ENCODE measurements at regions of chr7 and their contacts with region 1.

Region 1: DNA sequence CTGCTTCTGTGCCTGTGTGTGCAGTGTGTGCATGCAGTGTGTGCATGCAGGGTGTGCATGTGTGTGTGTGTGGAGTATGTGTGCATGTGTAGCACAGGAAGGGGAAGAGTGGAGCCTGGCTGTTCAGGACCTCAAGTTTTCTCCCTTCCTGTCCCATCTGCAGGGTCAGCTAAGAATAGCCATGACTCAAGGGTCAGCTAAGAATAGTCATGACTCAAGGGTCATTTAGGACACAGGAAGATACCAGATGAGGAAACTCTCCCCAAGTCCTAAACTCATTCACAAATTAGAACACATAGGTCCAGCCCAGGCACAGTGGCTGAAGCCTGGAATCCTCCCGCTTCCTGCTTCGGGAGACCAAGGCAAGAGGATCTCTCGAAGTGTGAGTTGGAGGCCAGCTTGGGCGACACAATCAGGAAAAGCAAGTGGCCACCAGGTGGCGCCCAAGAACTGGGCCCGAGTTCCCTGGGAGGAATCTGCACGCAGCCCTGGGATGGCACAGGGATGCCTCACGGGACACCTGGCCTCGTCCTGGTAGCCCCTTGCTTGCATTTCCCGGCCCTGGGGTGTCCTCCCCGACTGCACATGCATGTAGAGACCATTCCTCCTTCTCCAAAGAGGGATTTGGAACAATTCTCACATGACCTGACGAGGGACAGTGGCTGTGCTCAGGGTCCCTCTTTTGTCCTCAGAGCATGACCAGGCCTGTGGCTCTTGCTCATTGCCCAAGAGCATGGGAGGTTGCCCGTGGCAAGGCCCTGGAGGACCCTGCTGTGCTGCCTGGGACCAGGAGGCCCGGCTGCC is 21.4 kb upstream of the VOPP1 start:
- DNase-seq: no peak
- H3K4me3 ChIP-seq: no peak overlapping the region
- H3K27ac ChIP-seq: no peak overlapping the region
- H3K27me3 ChIP-seq: peaks cover 11% of the 10 kb centered on the region
- CTCF ChIP-seq: peak; percentile 70

Region 2: GRCh38 chr7:55545496-55545895 is 48.2 kb before region 1 on chr7:
- CTCF ChIA-PET with region 1: no interaction called
- POLR2A ChIA-PET with region 1: interaction called, 12 read pairs
- DNase-seq: no peak
- H3K4me3 ChIP-seq: no peak overlapping the region
- H3K27ac ChIP-seq: no peak overlapping the region
- H3K27me3 ChIP-seq: no peaks in the 10 kb centered on the region
- CTCF ChIP-seq: peak; percentile 24